ENCODE measurements at regions of chr4 and their contacts with region 1.

Region 1: GRCh38 chr4:40924096-40924792 is 174.5 kb downstream of the NSUN7 start:
- DNase-seq: peak; percentile 38 to 58
- ATAC-seq: peak; percentile 80 to 88; a peak in 4 of 6 replicates
- H3K4me3 ChIP-seq: no peak overlapping the region
- H3K27ac ChIP-seq: 0 out of 6 replicates have a peak overlapping the region, but pooled peaks of 1 of the 2 experiments have one; percentile 24
- H3K4me1 ChIP-seq: no peaks in the 10 kb centered on the region
- CTCF ChIP-seq: peak; percentile 52
- EP300 ChIP-seq: no peak
- POLR2A ChIP-seq: no peak
- RAD21 ChIP-seq: peak; percentile 29 to 51; a peak in 3 of 5 replicates

Region 2: GRCh38 chr4:40881096-40881495 is 43.1 kb before region 1 on chr4:
- CTCF ChIA-PET with region 1: no interaction called
- POLR2A ChIA-PET with region 1: no interaction called
- DNase-seq: no peak
- ATAC-seq: no peak
- H3K4me3 ChIP-seq: no peak overlapping the region
- H3K27ac ChIP-seq: no peak overlapping the region
- H3K4me1 ChIP-seq: no peaks in the 10 kb centered on the region
- CTCF ChIP-seq: no peak
- EP300 ChIP-seq: no peak
- POLR2A ChIP-seq: no peak
- RAD21 ChIP-seq: no peak

Region 3: DNA sequence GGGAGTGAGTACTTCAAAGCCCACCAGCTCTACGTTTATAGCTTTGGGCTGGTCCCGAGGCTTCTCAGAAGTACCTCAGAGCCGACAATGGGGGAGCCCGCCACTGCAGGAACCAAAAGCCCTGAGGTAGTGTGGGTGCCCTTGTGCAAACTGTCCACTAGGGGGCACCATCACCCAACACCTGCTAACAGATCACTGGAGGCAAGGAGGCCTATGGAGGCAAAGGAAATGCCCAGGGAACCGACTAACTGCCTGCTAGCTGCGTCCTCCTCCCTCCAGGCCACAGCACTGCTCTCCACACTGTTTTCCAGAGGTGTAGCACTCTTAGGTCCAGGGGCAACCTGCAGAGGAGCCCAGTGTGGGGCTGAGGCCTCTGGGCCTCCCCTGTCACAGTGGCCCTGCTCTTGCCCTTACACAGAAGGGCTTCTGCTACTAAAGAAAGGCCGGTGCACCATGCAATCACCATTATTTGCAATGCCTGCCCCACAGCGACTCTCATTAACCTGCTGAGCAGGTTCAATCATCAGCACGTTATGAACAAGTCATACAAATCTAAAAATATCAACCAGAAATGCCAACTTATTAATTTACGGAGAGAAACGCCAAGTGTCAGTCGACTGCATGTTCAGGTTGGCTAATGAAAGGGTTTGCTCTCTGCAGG is 15.4 kb before region 1 on chr4:
- CTCF ChIA-PET with region 1: interaction called, 54 read pairs
- POLR2A ChIA-PET with region 1: interaction called, 3 read pairs
- DNase-seq: peak; percentile 75 to 79
- ATAC-seq: peak; percentile 98 to 99
- H3K4me3 ChIP-seq: no peak overlapping the region
- H3K27ac ChIP-seq: peak overlapping the region in 1 of 2 experiments; percentile 63; a peak in 2 of 6 replicates
- H3K4me1 ChIP-seq: peaks cover 9% of the 10 kb centered on the region; the same call in 2 of the 3 replicates
- CTCF ChIP-seq: peak; percentile 83
- EP300 ChIP-seq: no peak
- POLR2A ChIP-seq: no peak
- RAD21 ChIP-seq: peak; percentile 69 to 74

Measured in A549 (cell line).